ENCODE measurements at regions of chr11 and their contacts with region 1.

Region 1: GRCh38 chr11:72471005-72471898 is 36.9 kb upstream of the CLPB start:
- DNase-seq: peak; percentile 44 to 63
- H3K4me3 ChIP-seq: peak overlapping the region in 1 of 4 experiments; percentile 38; a peak in 1 of 8 replicates
- H3K27ac ChIP-seq: no peak overlapping the region
- H3K4me1 ChIP-seq: peaks cover 0 to 5% (median 0%) of the 10 kb centered on the region in 4 experiments; a peak in 2 of 7 replicates
- H3K27me3 ChIP-seq: peaks cover 0 to 3% (median under 1%) of the 10 kb centered on the region in 4 experiments; a peak in 2 of 7 replicates
- CTCF ChIP-seq: peak; percentile 68 to 85 (median 77)
- EP300 ChIP-seq: no peak
- POLR2A ChIP-seq: no peak
- RAD21 ChIP-seq: peak; percentile 81 to 85

Region 2: DNA sequence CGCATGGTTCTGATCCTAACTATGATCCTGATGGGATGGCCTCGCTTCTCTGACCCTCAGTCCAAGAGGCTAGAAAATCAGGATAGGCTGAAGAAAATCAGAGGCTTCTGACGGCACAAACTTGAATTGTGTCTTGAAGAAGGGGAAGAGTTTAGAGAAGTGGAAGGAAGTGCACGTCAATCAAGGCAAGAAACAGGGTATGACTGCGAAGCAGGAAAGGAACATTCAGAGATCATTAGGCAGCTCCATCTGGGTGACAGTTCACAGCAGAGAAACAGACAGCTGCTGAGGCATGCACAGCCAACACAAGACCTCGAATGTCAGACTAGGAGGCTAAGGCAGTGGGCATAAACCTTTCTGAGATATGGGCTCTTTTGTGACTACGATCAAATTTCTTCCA is 66.2 kb before region 1 on chr11:
- CTCF ChIA-PET with region 1: no interaction called
- POLR2A ChIA-PET with region 1: no interaction called
- DNase-seq: no peak
- H3K4me3 ChIP-seq: no peak overlapping the region
- H3K27ac ChIP-seq: no peak overlapping the region
- H3K4me1 ChIP-seq: peaks cover 0 to 7% (median 2%) of the 10 kb centered on the region in 4 experiments; a peak in 6 of 7 replicates
- H3K27me3 ChIP-seq: no peaks in the 10 kb centered on the region
- CTCF ChIP-seq: no peak
- EP300 ChIP-seq: no peak
- POLR2A ChIP-seq: no peak
- RAD21 ChIP-seq: no peak

Region 3: GRCh38 chr11:72446902-72447769 is 24.1 kb before region 1 on chr11:
- CTCF ChIA-PET with region 1: interaction called, 20 read pairs
- POLR2A ChIA-PET with region 1: no interaction called
- DNase-seq: no peak
- H3K4me3 ChIP-seq: no peak overlapping the region
- H3K27ac ChIP-seq: no peak overlapping the region
- H3K4me1 ChIP-seq: no peaks in the 10 kb centered on the region
- H3K27me3 ChIP-seq: no peaks in the 10 kb centered on the region
- CTCF ChIP-seq: peak in 2 of 3 experiments; percentile 76 to 94; a peak in 3 of 4 replicates
- EP300 ChIP-seq: no peak
- POLR2A ChIP-seq: no peak
- RAD21 ChIP-seq: peak; percentile 70 to 72

Region 4: GRCh38 chr11:72460091-72460647 is 11.1 kb before region 1 on chr11:
- CTCF ChIA-PET with region 1: interaction called, 51 read pairs
- POLR2A ChIA-PET with region 1: interaction called, 3 read pairs
- DNase-seq: no peak
- H3K4me3 ChIP-seq: no peak overlapping the region
- H3K27ac ChIP-seq: no peak overlapping the region
- H3K4me1 ChIP-seq: no peaks in the 10 kb centered on the region
- H3K27me3 ChIP-seq: no peaks in the 10 kb centered on the region; a peak in 2 of 7 replicates
- CTCF ChIP-seq: no peak
- EP300 ChIP-seq: no peak
- POLR2A ChIP-seq: no peak
- RAD21 ChIP-seq: no peak

Region 5: DNA sequence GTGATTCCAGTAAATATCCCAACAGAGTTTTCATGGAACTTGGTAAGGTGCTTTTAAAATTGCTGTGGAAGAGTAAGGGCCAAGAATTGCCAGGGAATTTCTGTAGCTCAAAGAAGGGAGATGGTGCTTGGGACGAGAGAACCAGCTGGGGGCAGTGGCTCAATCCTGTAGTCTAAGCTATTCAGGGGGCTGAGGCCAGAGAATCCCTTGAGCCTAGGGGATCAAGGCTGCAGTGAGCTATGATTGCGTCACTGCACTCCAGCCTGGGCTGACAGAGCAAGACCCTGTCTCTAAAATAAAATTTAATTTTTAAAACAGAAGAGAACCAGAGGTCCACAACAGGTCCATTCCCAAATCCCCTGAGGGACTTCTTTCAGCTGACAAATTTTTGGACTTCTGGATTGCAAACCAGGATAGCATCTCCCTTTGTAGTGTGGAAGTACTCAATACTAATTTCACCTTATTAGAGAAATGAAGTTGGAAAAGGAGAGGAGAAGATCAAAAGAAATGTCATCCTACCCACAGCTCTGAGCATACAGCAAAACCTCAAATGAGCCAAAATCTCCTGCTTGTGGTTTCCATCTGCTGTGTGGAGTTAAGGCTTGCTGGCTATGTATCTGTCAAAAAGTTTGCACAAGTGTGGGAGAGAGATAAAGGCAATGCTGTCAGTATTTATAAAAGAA is 22.3 kb after region 1 on chr11:
- CTCF ChIA-PET with region 1: interaction called, 13 read pairs
- POLR2A ChIA-PET with region 1: interaction called, 5 read pairs
- DNase-seq: no peak
- H3K4me3 ChIP-seq: no peak overlapping the region
- H3K27ac ChIP-seq: no peak overlapping the region
- H3K4me1 ChIP-seq: no peaks in the 10 kb centered on the region
- H3K27me3 ChIP-seq: no peaks in the 10 kb centered on the region
- CTCF ChIP-seq: peak in 2 of 3 experiments; percentile 17 to 20; a peak in 1 of 4 replicates
- EP300 ChIP-seq: no peak
- POLR2A ChIP-seq: no peak
- RAD21 ChIP-seq: peak; percentile 23 to 40; a peak in 3 of 4 replicates

Region 6: GRCh38 chr11:72546866-72547265 is 75.6 kb after region 1 on chr11:
- CTCF ChIA-PET with region 1: interaction called, 14 read pairs
- POLR2A ChIA-PET with region 1: no interaction called
- DNase-seq: no peak
- H3K4me3 ChIP-seq: no peak overlapping the region
- H3K27ac ChIP-seq: no peak overlapping the region
- H3K4me1 ChIP-seq: no peaks in the 10 kb centered on the region
- H3K27me3 ChIP-seq: no peaks in the 10 kb centered on the region
- CTCF ChIP-seq: no peak
- EP300 ChIP-seq: no peak
- POLR2A ChIP-seq: no peak
- RAD21 ChIP-seq: no peak

Region 7: GRCh38 chr11:72561856-72562255 is 90.6 kb after region 1 on chr11:
- CTCF ChIA-PET with region 1: interaction called, 23 read pairs
- POLR2A ChIA-PET with region 1: no interaction called
- DNase-seq: no peak
- H3K4me3 ChIP-seq: no peak overlapping the region
- H3K27ac ChIP-seq: no peak overlapping the region
- H3K4me1 ChIP-seq: no peaks in the 10 kb centered on the region
- H3K27me3 ChIP-seq: no peaks in the 10 kb centered on the region
- CTCF ChIP-seq: no peak
- EP300 ChIP-seq: no peak
- POLR2A ChIP-seq: no peak
- RAD21 ChIP-seq: no peak

Region 8: GRCh38 chr11:72585762-72586311 is 114.6 kb after region 1 on chr11:
- CTCF ChIA-PET with region 1: interaction called, 14 read pairs
- POLR2A ChIA-PET with region 1: no interaction called
- DNase-seq: peak in 1 of 2 experiments; percentile 82
- H3K4me3 ChIP-seq: no peak overlapping the region
- H3K27ac ChIP-seq: no peak overlapping the region
- H3K4me1 ChIP-seq: peaks cover 0 to 7% (median 3%) of the 10 kb centered on the region in 4 experiments; a peak in 4 of 7 replicates
- H3K27me3 ChIP-seq: peaks cover 24 to 73% (median 57%) of the 10 kb centered on the region in 4 experiments
- CTCF ChIP-seq: peak; percentile 84 to 94 (median 90)
- EP300 ChIP-seq: no peak
- POLR2A ChIP-seq: no peak
- RAD21 ChIP-seq: peak; percentile 87 to 89